ENCODE measurements at regions of chr16 and their contacts with region 1.

Region 1: DNA sequence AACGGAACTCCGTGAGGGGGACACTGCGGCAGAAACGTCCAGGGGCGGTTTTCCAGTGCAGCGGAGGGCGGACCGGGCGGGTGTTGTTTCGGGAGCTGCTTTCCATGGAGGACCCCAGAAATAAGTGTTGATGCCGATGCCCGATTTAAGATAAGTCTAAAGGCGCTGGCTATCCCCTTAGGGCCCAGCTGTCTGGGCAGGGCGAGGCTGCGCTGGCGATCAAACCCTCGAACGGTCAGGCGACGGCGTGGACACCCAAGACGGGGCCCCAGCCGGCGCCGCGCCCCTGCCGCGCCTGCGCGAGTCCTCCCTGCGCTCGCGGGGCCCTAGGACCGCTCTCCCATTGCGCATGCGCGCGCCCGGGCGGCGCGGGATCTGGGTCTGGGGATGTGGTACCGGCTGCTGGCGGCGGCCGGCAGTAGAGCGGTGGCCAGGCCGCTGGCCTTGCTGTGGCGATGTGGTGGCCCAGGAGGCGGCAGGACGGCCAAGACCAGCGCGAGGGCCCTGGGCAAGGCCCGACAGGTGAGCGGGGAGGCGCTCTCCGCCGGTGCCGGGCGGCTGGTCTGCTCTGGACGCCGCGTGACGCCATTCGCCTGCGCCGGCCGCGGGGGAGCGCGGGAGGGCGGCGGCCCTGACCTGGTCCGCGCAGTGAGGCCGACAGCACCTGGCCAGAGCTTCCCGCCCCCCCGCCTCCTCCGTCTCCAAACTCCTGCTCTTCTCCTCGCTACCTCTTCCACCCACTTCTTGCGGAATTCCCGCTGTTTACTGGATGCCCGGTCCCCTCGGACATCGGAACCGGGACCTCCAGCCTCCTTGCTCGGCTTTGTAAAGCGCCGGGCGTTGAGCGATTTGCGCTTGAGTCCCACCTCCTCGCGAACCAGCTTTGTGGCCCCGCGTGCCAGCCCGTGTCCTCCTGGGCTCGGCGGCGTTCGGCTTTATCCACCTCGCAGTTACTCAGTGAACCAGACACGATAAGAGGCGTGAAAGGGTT is 24.0 kb downstream of the DEF8 start:
- DNase-seq: peak; percentile 79 to 99 (median 88)

Region 2: DNA sequence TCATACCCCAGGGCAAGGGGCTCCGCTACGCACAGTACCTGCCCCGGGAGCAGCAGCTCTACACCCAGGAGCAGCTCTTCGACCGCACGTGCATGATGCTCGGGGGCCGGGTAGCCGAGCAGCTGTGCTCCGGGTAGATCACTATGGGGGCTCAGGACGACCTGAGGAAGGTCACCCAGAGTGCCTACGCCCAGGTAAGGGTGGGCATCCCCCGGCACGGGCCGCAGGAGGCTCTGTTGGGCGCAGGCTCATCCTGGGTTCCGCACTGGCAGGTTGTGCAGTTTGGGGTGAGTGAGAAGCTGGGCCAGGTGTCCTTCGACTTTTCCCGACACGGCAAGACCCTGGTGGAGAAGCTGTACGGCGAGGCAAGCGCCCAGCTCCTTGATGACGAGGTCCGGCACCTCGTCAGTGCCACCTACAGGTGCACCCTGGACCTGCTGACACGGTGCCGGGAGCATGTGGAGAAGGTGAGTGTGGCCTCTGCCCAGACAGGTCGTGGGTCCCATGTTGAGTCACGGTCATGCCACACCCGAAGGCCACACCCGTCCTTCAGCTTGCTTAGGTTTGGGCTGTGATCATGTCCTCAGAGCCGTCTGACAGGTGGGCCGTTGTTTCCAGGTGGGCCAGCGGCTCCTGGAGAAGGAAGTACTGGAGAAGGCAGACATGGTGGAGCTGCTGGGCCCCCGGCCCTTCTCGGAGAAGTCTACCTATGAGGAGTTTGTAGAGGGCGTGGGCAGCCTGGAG is 27.5 kb after region 1 on chr16:
- intact Hi-C with region 1: no loop called
- DNase-seq: peak in 1 of 10 donors; percentile 79

Region 3: DNA sequence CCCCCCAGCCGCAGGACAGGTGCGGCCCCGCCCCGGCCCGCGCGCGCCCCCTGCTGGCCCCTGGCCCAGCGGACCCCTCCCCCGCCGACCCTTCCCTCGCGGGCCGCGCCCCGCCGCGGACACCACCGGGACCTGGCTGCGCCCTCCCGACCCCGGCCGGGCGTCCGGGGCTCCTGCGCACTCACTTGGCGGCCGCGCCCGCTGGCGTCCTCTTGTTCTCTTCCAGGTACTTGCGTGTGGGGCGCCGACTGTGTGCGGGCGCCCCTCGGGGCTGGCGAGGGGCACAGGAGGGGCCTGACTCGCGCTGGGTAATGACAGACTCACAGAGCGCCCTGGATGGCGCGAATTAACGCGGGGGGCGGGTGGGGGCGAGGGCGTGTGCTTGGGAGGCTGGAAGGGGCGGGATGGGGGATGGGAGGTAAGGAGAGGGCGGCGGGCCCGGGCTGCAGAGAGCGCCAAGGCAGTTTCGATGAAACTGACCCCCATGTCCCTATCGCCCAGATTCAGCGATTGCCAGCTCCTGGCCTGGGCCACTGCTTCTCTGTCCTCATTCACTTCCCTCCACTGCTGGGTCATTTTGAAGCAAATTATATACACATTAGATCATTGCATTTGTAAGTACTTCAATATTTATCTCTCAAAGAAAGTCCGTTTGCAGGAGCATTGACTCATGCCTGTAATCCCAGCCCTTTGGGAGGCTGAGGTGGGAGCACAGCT is 47.2 kb after region 1 on chr16:
- intact Hi-C with region 1: loop called (anchors 5 kb)
- DNase-seq: peak in 1 of 10 donors; percentile 52

Measured in posterior cingulate gyrus (tissue), 11 donors.